ENCODE measurements at regions of chr18 and their contacts with region 1.

Region 1: DNA sequence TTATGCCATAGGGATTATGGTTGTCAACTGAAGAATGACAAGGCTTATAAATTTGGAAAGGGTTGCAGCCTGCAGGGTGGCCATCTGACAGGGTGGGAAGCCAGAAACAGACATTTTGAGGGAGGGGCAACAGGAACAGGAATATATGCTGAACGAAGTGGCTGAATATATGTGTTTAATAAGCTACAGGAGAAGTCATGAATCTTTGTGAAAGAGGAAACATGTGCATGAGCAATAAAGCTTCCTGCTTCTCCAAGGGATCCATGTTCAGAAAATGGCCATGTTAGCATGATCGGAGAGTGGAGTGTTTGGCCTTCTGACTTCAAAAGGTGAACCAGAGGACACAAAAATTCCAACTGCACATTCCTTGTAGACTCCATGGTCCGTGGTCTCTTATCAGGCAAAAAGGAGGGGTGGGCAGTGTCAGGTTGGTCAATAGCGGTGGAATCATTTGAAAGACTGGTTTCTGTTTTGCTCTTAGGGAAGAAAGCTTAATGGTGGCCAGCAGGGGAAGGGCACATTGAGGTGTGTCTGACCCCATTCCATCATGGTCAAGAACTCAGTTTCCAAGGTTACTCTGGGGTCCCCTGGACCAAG is 144.1 kb downstream of the SOCS6 start:
- DNase-seq: no peak
- ATAC-seq: no peak
- H3K4me3 Mint-ChIP-seq: no peak overlapping the region
- H3K27ac Mint-ChIP-seq: no peak overlapping the region
- H3K4me1 Mint-ChIP-seq: peaks cover 3% of the 10 kb centered on the region
- H3K27me3 Mint-ChIP-seq: no peaks in the 10 kb centered on the region

Region 2: GRCh38 chr18:70195852-70196434 is 237.0 kb before region 1 on chr18:
- CTCF ChIA-PET with region 1: interaction called, 20 read pairs
- POLR2A ChIA-PET with region 1: no interaction called
- DNase-seq: peak; percentile 29
- ATAC-seq: no peak
- H3K4me3 Mint-ChIP-seq: no peak overlapping the region
- H3K27ac Mint-ChIP-seq: no peak overlapping the region
- H3K4me1 Mint-ChIP-seq: peaks cover 8% of the 10 kb centered on the region
- H3K27me3 Mint-ChIP-seq: no peaks in the 10 kb centered on the region

Region 3: GRCh38 chr18:70421471-70422390 is 11.2 kb before region 1 on chr18:
- CTCF ChIA-PET with region 1: interaction called, 10 read pairs
- POLR2A ChIA-PET with region 1: no interaction called
- DNase-seq: no peak
- ATAC-seq: no peak
- H3K4me3 Mint-ChIP-seq: no peak overlapping the region
- H3K27ac Mint-ChIP-seq: no peak overlapping the region
- H3K4me1 Mint-ChIP-seq: peaks cover 4% of the 10 kb centered on the region
- H3K27me3 Mint-ChIP-seq: peaks cover 6% of the 10 kb centered on the region

Region 4: GRCh38 chr18:70454704-70455322 is 21.9 kb after region 1 on chr18:
- CTCF ChIA-PET with region 1: interaction called, 17 read pairs
- POLR2A ChIA-PET with region 1: no interaction called
- DNase-seq: peak; percentile 52
- ATAC-seq: peak; percentile 44
- H3K4me3 Mint-ChIP-seq: no peak overlapping the region
- H3K27ac Mint-ChIP-seq: no peak overlapping the region
- H3K4me1 Mint-ChIP-seq: no peaks in the 10 kb centered on the region
- H3K27me3 Mint-ChIP-seq: no peaks in the 10 kb centered on the region

Measured in activated CD8-positive, alpha-beta T cell treated with anti-CD3 and anti-CD28 coated beads, Interleukin-2, amount 10 ng/mL, durations not matched to agents 7 days and 5 days (primary cell).